Activated CD4-positive, alpha-beta T cell treated with anti-CD3 and anti-CD28 coated beads for 36 hours (primary cell): ENCODE measurements at regions of chr7 and their contacts with region 1.

Region 1: DNA sequence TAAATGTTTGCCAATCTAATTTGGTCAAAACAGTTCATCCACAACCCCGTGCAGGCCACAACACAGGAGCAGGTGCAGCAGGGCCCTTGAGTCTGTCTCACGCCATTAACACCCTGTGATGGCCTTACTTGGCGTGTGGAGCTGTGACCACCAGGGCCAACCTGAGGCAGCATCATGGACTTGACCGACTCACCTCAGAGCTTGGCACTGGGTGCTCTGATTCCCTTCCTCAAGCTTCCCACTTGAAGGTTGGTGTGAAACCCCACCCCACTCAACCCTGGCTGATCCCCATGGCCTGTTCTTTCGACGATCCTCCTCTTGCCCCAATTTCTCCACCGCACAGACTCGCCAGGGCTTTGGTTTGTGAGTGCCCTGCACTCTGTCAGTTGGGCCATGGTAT is 623.1 kb downstream of the PTPRN2 start:
- DNase-seq: no peak
- ATAC-seq: no peak
- H3K4me3 Mint-ChIP-seq: no peak overlapping the region
- H3K27ac Mint-ChIP-seq: no peak overlapping the region
- H3K4me1 Mint-ChIP-seq: no peaks in the 10 kb centered on the region
- H3K27me3 Mint-ChIP-seq: peaks cover 5% of the 10 kb centered on the region

Region 2: GRCh38 chr7:158031867-158032308 is 67.4 kb after region 1 on chr7:
- CTCF ChIA-PET with region 1: no interaction called
- POLR2A ChIA-PET with region 1: no interaction called
- intact Hi-C with region 1: loop called in 1 of 2 experiments (anchors 2 kb)
- DNase-seq: no peak
- ATAC-seq: no peak
- H3K4me3 Mint-ChIP-seq: no peak overlapping the region
- H3K27ac Mint-ChIP-seq: no peak overlapping the region
- H3K4me1 Mint-ChIP-seq: no peaks in the 10 kb centered on the region
- H3K27me3 Mint-ChIP-seq: peaks cover 6% of the 10 kb centered on the region